ENCODE measurements at regions of chr16 and their contacts with region 1.

Region 1: GRCh38 chr16:74611721-74612120 is 4.8 kb upstream of the GLG1 start:
- DNase-seq: no peak
- ATAC-seq: no peak
- H3K4me3 ChIP-seq: no peak overlapping the region
- H3K27ac ChIP-seq: no peak overlapping the region
- H3K4me1 ChIP-seq: peaks cover 17% of the 10 kb centered on the region
- H3K27me3 ChIP-seq: no peaks in the 10 kb centered on the region
- CTCF ChIP-seq: no peak
- POLR2A ChIP-seq: no peak

Region 2: GRCh38 chr16:74480141-74481029 is 131.3 kb before region 1 on chr16:
- intact Hi-C with region 1: loop called (anchors 10 kb)
- DNase-seq: peak in 3 of 4 donors; percentile 10 to 23 (median 13)
- ATAC-seq: no peak
- H3K4me3 ChIP-seq: no peak overlapping the region
- H3K27ac ChIP-seq: peak overlapping the region in 2 of 4 donors; percentile 15 to 38
- H3K4me1 ChIP-seq: peaks cover 14% of the 10 kb centered on the region
- H3K27me3 ChIP-seq: no peaks in the 10 kb centered on the region
- CTCF ChIP-seq: no peak
- POLR2A ChIP-seq: no peak